H1 (cell line): ENCODE measurements at regions of chr19 and their contacts with region 1.

Region 1: DNA sequence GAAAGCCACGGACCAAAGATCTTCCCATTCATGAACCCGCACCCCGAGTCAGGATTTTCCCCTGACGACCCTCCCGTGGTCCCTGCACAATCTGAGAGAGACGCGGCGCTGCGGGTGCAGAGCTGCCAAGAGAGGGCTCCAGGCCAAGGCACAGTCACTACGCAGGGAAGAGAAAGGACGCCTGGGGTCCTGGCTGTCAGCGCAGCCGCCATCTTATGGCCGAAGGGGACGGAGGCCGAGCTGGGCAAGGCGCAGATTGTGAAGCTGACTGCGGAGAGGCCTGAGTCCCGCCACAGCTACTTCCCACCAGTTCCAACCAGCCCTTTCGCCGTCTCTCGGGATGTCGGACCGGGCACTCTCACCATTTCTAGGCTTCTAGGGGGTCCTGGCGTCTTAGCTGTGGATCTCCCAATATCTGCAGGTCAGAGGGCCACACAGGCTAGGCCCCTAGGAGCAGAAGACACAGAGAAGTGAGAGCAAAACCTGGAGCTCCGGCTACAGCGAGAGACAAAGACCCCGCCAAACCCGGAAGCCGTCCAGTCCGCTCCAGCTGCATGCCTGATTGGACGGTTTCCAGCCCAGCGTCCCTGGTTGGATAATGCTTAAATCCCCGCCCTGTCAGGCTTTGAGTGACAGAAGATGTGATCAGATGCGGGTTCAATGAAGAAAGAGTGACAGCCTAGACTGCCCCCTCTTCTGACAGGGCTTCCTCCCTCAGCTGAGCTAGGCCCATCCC is at the start of gene ZNF100:
- DNase-seq: peak; percentile 79 to 87
- H3K4me3 ChIP-seq: peak within 1 kb of the TSS; percentile 87 to 99 (median 98)
- H3K27ac ChIP-seq: peak within 1 kb of the TSS; percentile 96
- H3K4me1 ChIP-seq: no peaks in the 10 kb centered on the region; a peak in 1 of 7 replicates
- H3K27me3 ChIP-seq: no peaks in the 10 kb centered on the region
- CTCF ChIP-seq: no peak
- EP300 ChIP-seq: no peak
- POLR2A ChIP-seq: peak; percentile 83 to 93
- RAD21 ChIP-seq: no peak; a peak in 1 of 4 replicates
- total RNA-seq, gene ZNF100: 30.8 and 34.5 TPM in 2 replicates

Region 2: DNA sequence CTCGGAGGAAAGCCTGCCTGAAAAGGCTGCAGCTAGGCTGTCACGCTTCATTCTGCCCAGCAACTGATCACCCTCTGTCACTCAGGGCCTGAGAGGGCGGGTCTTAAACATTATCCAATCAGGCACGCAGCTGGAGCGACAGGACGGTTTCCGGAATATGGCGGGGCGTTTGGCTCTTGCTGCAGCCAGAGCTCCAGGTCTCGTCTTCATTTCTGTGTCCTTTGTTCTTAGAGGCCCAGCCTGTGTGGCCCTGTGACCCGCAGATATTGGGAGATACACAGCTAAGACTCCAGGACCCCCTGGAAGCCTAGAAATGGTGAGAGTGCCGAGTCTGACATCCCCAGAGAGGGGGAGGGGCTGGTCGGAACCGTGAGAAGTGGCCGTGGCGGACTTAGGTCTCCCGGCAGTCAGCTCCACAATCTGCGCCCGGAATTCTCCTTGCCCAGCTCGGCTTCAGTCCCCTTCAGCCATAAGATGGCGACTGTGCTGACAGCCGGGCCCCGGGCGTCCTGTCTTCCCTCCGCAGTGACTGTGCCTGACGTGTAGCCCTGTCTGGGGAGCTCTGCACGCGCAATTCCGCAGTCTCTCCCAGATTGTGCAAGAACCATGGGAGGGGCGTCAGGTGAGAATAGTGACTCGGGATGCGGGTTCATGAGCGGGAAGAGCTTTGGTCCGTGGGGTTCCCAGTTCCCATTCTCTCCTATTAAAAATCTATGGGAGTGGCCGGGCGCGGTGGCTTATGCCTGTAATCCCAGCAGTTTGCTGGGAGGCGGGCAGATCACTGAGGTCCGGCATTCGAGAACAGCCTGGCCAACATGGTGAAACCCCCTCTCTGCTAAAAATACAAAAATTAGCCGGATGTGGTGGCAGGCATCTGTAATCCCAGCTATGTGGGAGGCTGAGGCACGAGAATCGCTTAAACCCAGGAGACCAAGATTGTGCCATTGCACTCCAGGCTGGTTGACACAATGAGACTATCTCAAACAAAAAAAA is 261.5 kb before region 1 on chr19 and contains the start of gene ZNF429:
- CTCF ChIA-PET with region 1: no interaction called
- POLR2A ChIA-PET with region 1: interaction called, 18 read pairs
- DNase-seq: peak; percentile 85 to 88
- H3K4me3 ChIP-seq: peak within 1 kb of the TSS; percentile 78 to 95 (median 92)
- H3K27ac ChIP-seq: peak within 1 kb of the TSS; percentile 84
- H3K4me1 ChIP-seq: no peaks in the 10 kb centered on the region
- H3K27me3 ChIP-seq: no peaks in the 10 kb centered on the region
- CTCF ChIP-seq: peak in 1 of 3 experiments; percentile 11; a peak in 2 of 4 replicates
- EP300 ChIP-seq: no peak
- POLR2A ChIP-seq: peak; percentile 63 to 83
- RAD21 ChIP-seq: peak in 1 of 2 experiments; percentile 20; a peak in 3 of 4 replicates
- total RNA-seq, gene ZNF429: 15.0 and 15.4 TPM in 2 replicates

Region 3: DNA sequence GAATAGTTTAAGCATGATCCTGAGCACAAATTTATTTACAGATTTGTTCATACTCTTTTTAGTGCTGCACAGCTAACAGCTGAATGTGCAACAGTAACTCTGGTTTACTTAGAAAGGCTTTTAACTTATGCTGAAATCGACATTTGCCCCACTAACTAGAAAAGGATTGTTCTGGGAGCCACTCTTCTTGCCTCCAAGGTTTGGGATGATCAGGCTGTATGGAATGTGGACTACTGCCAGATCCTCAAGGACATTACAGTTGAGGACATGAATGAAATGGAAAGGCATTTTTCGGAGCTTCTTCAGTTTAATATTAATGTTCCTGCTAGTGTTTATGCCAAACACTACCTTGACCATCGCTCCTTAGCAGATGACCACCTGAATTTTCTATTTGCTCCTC is 15.9 kb before region 1 on chr19:
- CTCF ChIA-PET with region 1: no interaction called
- POLR2A ChIA-PET with region 1: interaction called, 15 read pairs
- DNase-seq: no peak
- H3K4me3 ChIP-seq: no peak overlapping the region
- H3K27ac ChIP-seq: no peak overlapping the region
- H3K4me1 ChIP-seq: peaks cover 0 to 2% (median 0%) of the 10 kb centered on the region in 4 experiments; a peak in 1 of 7 replicates
- H3K27me3 ChIP-seq: no peaks in the 10 kb centered on the region
- CTCF ChIP-seq: no peak
- EP300 ChIP-seq: no peak
- POLR2A ChIP-seq: no peak
- RAD21 ChIP-seq: no peak

Region 4: DNA sequence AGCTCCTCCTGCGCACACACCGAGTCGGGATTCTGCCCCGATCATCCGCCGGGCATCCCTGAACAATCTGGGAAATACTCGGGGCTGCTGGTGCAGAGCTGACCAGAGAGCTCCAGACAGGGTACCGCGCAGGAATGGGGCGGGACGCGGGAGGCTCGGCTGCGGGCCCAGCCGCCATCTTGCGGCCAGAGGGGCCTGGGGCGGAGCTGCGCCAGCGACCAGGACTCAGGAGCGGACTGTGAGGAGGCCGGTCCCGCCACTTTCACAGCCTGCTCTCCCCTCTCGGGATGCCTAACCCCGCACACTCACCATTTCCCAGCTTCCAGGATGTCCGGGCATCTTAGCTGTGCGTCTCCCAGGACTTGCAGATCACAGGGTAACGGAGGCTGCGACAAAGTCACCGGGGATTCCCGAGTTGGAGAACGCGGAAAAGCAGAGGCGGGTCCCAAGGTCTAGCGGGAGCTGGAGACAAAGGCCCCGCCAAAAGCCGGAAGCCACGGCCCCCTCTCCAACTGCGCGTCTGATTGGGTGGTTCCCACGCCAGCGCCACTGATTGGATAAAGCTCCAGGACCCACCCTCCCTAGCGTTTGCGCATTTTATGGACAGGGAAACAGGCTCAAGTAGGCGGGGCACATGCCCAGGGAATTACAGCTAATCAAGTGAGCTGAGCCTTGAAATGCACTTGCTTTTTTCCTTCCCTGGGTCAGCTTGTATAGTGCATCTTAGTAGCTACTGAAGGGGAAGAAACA is 84.5 kb after region 1 on chr19:
- CTCF ChIA-PET with region 1: interaction called, 7 read pairs
- POLR2A ChIA-PET with region 1: interaction called, 25 read pairs
- DNase-seq: peak; percentile 85 to 93
- H3K4me3 ChIP-seq: peak overlapping the region; percentile 92 to 99 (median 97)
- H3K27ac ChIP-seq: peak overlapping the region; percentile 99
- H3K4me1 ChIP-seq: peaks cover 0 to 9% (median 3%) of the 10 kb centered on the region in 4 experiments; a peak in 3 of 7 replicates
- H3K27me3 ChIP-seq: no peaks in the 10 kb centered on the region
- CTCF ChIP-seq: peak in 1 of 3 experiments; percentile 17; a peak in 1 of 4 replicates
- EP300 ChIP-seq: no peak
- POLR2A ChIP-seq: peak; percentile 93 to 99
- RAD21 ChIP-seq: no peak; a peak in 1 of 4 replicates

Region 5: DNA sequence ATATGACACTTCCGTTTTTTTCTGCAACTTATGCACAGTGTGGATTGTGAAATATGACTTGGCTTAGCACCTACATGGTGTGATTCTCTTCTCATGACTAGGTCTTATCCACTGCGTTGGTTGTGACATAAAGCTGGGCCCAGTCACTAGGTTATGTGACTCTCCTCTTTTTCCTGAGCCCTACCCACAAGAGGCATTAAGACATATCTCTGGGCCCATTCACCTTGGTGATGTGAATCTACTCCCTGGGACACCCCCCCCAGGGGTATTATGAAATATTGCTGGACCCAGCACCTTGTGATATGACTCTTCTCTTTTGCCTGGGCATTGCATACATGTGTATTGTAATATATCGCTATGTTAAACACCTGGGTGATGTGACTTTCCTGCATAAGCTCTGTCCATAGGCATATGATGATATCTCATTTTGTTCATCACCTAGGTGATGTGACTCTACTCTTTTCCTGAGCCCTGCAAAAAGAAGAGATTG is 154.5 kb after region 1 on chr19:
- CTCF ChIA-PET with region 1: no interaction called
- POLR2A ChIA-PET with region 1: no interaction called
- DNase-seq: no peak
- H3K4me3 ChIP-seq: no peak overlapping the region
- H3K27ac ChIP-seq: no peak overlapping the region
- H3K4me1 ChIP-seq: no peaks in the 10 kb centered on the region
- H3K27me3 ChIP-seq: no peaks in the 10 kb centered on the region
- CTCF ChIP-seq: no peak
- EP300 ChIP-seq: no peak
- POLR2A ChIP-seq: no peak
- RAD21 ChIP-seq: no peak